ENCODE measurements at regions of chr15 and their contacts with region 1.

Region 1: DNA sequence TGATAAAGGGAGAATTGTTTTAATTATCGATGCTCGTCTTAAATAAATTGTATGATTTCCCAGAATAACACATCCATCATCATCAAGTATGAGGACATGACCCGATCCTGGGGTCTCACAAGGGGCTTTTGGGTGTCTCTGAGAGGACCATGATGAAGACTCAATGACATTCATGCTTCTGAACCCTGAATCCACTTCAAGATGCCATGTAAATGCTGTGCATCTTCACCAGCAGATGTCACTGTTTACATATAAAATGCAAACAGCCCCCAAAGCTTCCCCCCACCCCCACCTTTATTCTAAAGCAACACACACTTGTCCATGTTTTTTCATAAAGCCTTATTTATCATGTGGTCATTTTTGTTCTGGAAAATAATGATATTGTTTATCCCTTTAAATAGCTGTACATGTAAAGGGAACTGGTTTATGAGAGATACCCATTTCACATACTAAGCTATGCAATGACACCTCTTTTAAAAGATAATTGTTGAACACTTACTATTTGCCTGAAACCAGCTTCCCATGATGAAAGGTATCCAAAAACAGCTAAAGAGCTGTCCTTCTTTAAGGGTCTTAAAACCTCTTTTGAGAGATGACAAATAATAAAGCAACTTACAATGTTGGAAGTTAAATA is 69.7 kb upstream of the UBE3A start:
- DNase-seq: no peak
- H3K4me3 ChIP-seq: no peak overlapping the region
- H3K27ac ChIP-seq: no peak overlapping the region
- H3K4me1 ChIP-seq: no peaks in the 10 kb centered on the region
- H3K27me3 ChIP-seq: no peaks in the 10 kb centered on the region
- CTCF ChIP-seq: peak; percentile 22 to 74 (median 60)
- POLR2A ChIP-seq: no peak

Region 2: GRCh38 chr15:25136119-25136518 is 372.4 kb before region 1 on chr15:
- intact Hi-C with region 1: loop called (anchors 10 kb)
- DNase-seq: peak in 1 of 2 donors; percentile 3
- H3K4me3 ChIP-seq: no peak overlapping the region
- H3K27ac ChIP-seq: no peak overlapping the region
- H3K4me1 ChIP-seq: no peaks in the 10 kb centered on the region
- H3K27me3 ChIP-seq: no peaks in the 10 kb centered on the region
- CTCF ChIP-seq: peak in 3 of 6 experiments; percentile 24 to 27 (median 25)
- POLR2A ChIP-seq: no peak

Region 3: GRCh38 chr15:25568751-25569150 is 60.3 kb after region 1 on chr15:
- intact Hi-C with region 1: no loop called
- DNase-seq: no peak
- H3K4me3 ChIP-seq: no peak overlapping the region
- H3K27ac ChIP-seq: no peak overlapping the region
- H3K4me1 ChIP-seq: no peaks in the 10 kb centered on the region
- H3K27me3 ChIP-seq: no peaks in the 10 kb centered on the region
- CTCF ChIP-seq: no peak
- POLR2A ChIP-seq: no peak

Region 4: GRCh38 chr15:25701721-25702465 is 193.4 kb after region 1 on chr15:
- intact Hi-C with region 1: loop called (anchors 10 kb)
- DNase-seq: no peak
- H3K4me3 ChIP-seq: no peak overlapping the region
- H3K27ac ChIP-seq: no peak overlapping the region
- H3K4me1 ChIP-seq: no peaks in the 10 kb centered on the region
- H3K27me3 ChIP-seq: no peaks in the 10 kb centered on the region
- CTCF ChIP-seq: no peak
- POLR2A ChIP-seq: no peak

Region 5: DNA sequence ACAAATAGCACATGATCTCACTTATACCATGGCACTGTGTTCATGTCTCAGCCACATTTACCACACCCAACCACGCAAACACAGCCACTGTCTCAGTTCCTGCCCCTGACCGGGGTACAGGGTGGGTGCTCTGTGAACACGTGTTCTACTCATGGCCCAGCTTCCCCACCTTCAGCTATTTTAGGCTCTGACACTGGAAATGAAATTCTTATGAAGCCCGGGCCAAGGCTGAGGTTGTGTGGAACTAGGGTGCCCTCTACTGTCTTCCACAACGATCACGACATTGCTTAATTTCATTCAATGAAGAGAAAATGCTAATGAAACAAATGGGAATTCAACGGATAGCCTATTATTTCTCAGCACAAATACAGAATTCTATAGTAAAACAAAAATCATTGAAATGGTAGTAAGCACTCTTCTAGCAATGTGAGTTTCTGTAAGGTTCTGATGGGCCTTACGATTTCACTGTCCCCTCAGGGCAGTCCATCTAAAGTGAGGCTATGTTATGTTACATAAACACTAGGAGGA is 1356.2 kb after region 1 on chr15:
- intact Hi-C with region 1: loop called (anchors 10 kb)
- DNase-seq: peak; percentile 51 to 65
- H3K4me3 ChIP-seq: no peak overlapping the region
- H3K27ac ChIP-seq: no peak overlapping the region
- H3K4me1 ChIP-seq: peaks cover 0 to 13% of the 10 kb centered on the region in 2 donors
- H3K27me3 ChIP-seq: peaks cover 5% of the 10 kb centered on the region
- CTCF ChIP-seq: peak; percentile 30 to 83 (median 68)
- POLR2A ChIP-seq: no peak

Measured in thyroid gland (tissue), 4 donors.